Naive thymus-derived CD4-positive, alpha-beta T cell (primary cell): ENCODE measurements at regions of chr7 and their contacts with region 1.

Region 1: DNA sequence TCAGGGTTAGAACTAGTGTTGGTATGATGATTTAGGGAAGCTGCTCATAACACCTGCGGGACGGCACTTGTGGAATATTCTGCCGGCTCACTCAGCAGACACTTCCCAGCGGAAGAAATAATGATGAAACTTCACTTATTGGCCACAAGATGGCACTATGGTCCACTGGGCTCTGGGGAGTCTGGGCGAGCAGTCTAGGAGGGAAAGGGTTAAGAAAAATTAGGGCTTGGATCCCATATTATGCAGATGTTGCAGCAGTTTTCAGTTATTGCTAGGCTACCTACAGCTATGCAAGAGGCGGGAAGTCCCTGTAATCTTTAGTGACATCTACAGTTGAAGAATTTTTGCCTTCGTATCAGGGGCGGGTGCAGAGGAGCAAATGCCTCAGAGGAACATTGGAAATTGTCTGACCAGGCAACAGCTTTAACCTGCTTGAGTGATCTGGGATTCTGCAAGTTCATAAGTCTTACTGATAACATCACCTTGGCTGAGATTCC is 238.7 kb upstream of the PRSS58 start:
- DNase-seq: peak in 7 of 9 donors; percentile 39 to 58 (median 45)
- ATAC-seq: peak; percentile 71
- H3K4me3 ChIP-seq: peak overlapping the region; percentile 30
- H3K4me3 Mint-ChIP-seq: peak overlapping the region; percentile 41 to 85 (median 70)
- H3K27ac ChIP-seq: peak overlapping the region; percentile 64
- H3K27ac Mint-ChIP-seq: peak overlapping the region; percentile 33 to 93 (median 77)
- H3K4me1 ChIP-seq: peaks cover 5 to 46% of the 10 kb centered on the region in 2 donors
- H3K4me1 Mint-ChIP-seq: peaks cover 15 to 72% (median 65%) of the 10 kb centered on the region in 7 donors
- H3K27me3 ChIP-seq: no peaks in the 10 kb centered on the region
- H3K27me3 Mint-ChIP-seq: peaks cover 0 to 9% (median 0%) of the 10 kb centered on the region in 5 donors

Region 2: DNA sequence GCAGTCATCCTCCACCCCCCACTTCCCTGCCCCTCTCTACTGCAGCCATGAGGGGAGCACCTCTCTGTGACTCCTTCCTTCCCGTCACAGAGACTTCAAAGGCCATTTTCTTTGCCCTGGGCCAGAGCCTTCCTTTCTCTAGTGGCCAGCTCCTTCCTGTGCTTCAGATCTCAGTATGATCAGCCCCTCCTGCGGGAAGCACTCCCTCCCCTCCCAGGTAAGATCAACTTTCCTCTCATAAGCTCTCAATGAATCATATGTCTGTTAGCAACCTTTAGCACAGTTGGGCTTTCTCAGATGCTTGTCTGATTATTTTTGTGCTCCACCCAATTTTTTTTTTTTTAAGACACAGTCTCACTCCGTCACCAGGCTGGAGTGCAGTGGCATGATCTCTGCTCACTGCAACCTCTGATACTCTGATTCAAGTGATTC is 11.7 kb after region 1 on chr7:
- CTCF ChIA-PET with region 1: interaction called, 16 read pairs
- POLR2A ChIA-PET with region 1: interaction called, 51 read pairs
- intact Hi-C with region 1: loop called in 1 of 2 experiments (anchors 1 kb)
- DNase-seq: peak in 7 of 9 donors; percentile 30 to 57 (median 37)
- ATAC-seq: peak; percentile 65
- H3K4me3 ChIP-seq: no peak overlapping the region
- H3K4me3 Mint-ChIP-seq: peak overlapping the region in 9 of 10 donors; percentile 26 to 66 (median 59)
- H3K27ac ChIP-seq: peak overlapping the region; percentile 58
- H3K27ac Mint-ChIP-seq: peak overlapping the region; percentile 59 to 96 (median 92)
- H3K4me1 ChIP-seq: peaks cover 0 to 38% of the 10 kb centered on the region in 2 donors
- H3K4me1 Mint-ChIP-seq: peaks cover 9 to 65% (median 53%) of the 10 kb centered on the region in 7 donors
- H3K27me3 ChIP-seq: no peaks in the 10 kb centered on the region
- H3K27me3 Mint-ChIP-seq: peaks cover 0 to 20% (median 0%) of the 10 kb centered on the region in 5 donors

Region 3: DNA sequence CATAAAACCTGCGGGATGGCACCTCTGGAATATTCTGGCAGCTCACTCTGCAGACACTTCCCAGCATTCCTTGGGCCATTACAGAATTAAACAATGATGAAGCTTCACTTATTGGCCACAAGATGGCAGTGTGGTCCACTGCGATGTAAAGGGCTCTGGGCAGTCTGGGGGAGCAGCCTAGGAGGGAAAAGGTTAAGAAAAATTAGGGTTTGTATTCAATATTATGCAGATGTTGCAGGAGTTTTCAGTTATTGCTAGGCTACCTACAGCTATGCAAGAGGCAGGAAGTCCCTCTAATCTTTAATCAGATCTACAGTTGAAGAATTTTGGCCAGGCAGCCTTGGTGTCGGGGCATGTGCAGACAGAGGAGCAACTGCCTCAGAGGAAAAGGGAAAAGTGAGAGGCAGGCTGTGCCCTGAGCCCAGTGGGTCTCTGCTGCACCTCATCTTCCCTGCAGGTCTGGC is 19.5 kb after region 1 on chr7:
- CTCF ChIA-PET with region 1: interaction called, 24 read pairs
- POLR2A ChIA-PET with region 1: interaction called, 51 read pairs
- intact Hi-C with region 1: loop called (anchors 1 to 2 kb)
- DNase-seq: peak in 5 of 9 donors; percentile 42 to 55 (median 47)
- ATAC-seq: peak; percentile 85
- H3K4me3 ChIP-seq: no peak overlapping the region
- H3K4me3 Mint-ChIP-seq: peak overlapping the region in 7 of 10 donors; percentile 4 to 81 (median 46)
- H3K27ac ChIP-seq: no peak overlapping the region
- H3K27ac Mint-ChIP-seq: peak overlapping the region in 8 of 9 donors; percentile 32 to 92 (median 74)
- H3K4me1 ChIP-seq: peaks cover 0 to 35% of the 10 kb centered on the region in 2 donors
- H3K4me1 Mint-ChIP-seq: peaks cover 19 to 67% (median 56%) of the 10 kb centered on the region in 7 donors
- H3K27me3 ChIP-seq: no peaks in the 10 kb centered on the region
- H3K27me3 Mint-ChIP-seq: peaks cover 0 to 10% (median 0%) of the 10 kb centered on the region in 5 donors

Region 4: DNA sequence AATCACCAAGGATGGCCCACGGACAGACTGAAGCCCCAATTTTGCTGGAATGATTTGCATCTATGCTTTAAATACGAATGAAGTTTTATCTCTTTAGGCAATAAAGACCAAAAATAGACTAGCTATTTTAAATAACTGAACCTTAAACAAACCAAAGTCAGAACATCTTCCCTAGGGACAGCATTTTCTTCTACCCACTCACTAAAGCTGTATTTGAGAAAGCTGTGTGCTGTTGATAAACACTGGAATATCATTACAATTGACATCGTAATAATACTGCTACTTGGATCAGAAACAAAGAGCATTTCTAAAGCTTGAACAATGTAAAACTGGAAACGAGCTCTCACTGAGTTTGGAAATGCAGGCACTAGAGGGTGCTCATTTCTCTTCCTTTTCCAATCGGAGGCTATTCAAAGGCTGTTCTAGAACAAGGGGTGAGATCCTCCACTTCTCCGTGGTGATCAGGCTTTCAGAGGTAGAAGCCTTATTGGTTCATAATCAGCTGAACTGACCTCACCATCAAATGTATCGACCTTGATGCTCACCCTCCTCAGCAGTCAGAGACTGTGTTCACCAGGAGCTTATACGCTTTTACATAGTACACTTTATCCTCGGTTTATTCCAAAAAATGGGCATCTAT is 27.3 kb after region 1 on chr7:
- CTCF ChIA-PET with region 1: interaction called, 14 read pairs
- POLR2A ChIA-PET with region 1: interaction called, 8 read pairs
- intact Hi-C with region 1: no loop called
- DNase-seq: no peak
- ATAC-seq: no peak
- H3K4me3 ChIP-seq: no peak overlapping the region
- H3K4me3 Mint-ChIP-seq: no peak overlapping the region
- H3K27ac ChIP-seq: no peak overlapping the region
- H3K27ac Mint-ChIP-seq: peak overlapping the region in 1 of 9 donors; percentile 52
- H3K4me1 ChIP-seq: peaks cover 0 to 14% of the 10 kb centered on the region in 2 donors
- H3K4me1 Mint-ChIP-seq: peaks cover 11 to 31% (median 22%) of the 10 kb centered on the region in 7 donors
- H3K27me3 ChIP-seq: no peaks in the 10 kb centered on the region
- H3K27me3 Mint-ChIP-seq: peaks cover 0 to 27% (median 0%) of the 10 kb centered on the region in 5 donors